ENCODE measurements at regions of chr11 and their contacts with region 1.

Region 1: GRCh38 chr11:77637345-77638165 is at the start of gene CLNS1A:
- DNase-seq: peak; percentile 92
- H3K4me3 ChIP-seq: peak within 1 kb of the TSS; percentile 96
- H3K27ac ChIP-seq: peak within 1 kb of the TSS; percentile 59
- H3K4me1 ChIP-seq: peaks cover 12% of the 10 kb centered on the region
- CTCF ChIP-seq: no peak
- total RNA-seq, gene CLNS1A: 115 and 121 TPM in 2 replicates

Region 2: GRCh38 chr11:77820563-77821348 is 183.2 kb after region 1 on chr11 and contains the starts of genes AAMDC and RSF1:
- CTCF ChIA-PET with region 1: no interaction called
- POLR2A ChIA-PET with region 1: no interaction called
- intact Hi-C with region 1: loop called (anchors 2 kb)
- DNase-seq: peak; percentile 96
- H3K4me3 ChIP-seq: peak within 1 kb of the TSS; percentile 97
- H3K27ac ChIP-seq: peak within 1 kb of the TSS; percentile 85
- H3K4me1 ChIP-seq: peaks cover 13% of the 10 kb centered on the region
- CTCF ChIP-seq: peak; percentile 73
- total RNA-seq, gene AAMDC: 11.0 and 16.2 TPM in 2 replicates
- total RNA-seq, gene RSF1: 33.5 and 56.9 TPM in 2 replicates

Measured in OCI-LY7 (cell line).